A549 (cell line): ENCODE measurements at regions of chr5 and their contacts with region 1.

Region 1: GRCh38 chr5:140502834-140503233 is 44.6 kb upstream of the EIF4EBP3 start:
- DNase-seq: no peak
- ATAC-seq: no peak
- H3K4me3 ChIP-seq: no peak overlapping the region
- H3K27ac ChIP-seq: no peak overlapping the region
- H3K4me1 ChIP-seq: peaks cover 7% of the 10 kb centered on the region; the same call in 2 of the 3 replicates
- CTCF ChIP-seq: no peak
- EP300 ChIP-seq: no peak
- POLR2A ChIP-seq: no peak
- RAD21 ChIP-seq: no peak

Region 2: GRCh38 chr5:140524003-140524402 is 21.2 kb after region 1 on chr5:
- CTCF ChIA-PET with region 1: no interaction called
- POLR2A ChIA-PET with region 1: no interaction called
- DNase-seq: no peak
- ATAC-seq: no peak
- H3K4me3 ChIP-seq: no peak overlapping the region
- H3K27ac ChIP-seq: no peak overlapping the region
- H3K4me1 ChIP-seq: no peaks in the 10 kb centered on the region
- CTCF ChIP-seq: no peak
- EP300 ChIP-seq: no peak
- POLR2A ChIP-seq: no peak
- RAD21 ChIP-seq: no peak

Region 3: DNA sequence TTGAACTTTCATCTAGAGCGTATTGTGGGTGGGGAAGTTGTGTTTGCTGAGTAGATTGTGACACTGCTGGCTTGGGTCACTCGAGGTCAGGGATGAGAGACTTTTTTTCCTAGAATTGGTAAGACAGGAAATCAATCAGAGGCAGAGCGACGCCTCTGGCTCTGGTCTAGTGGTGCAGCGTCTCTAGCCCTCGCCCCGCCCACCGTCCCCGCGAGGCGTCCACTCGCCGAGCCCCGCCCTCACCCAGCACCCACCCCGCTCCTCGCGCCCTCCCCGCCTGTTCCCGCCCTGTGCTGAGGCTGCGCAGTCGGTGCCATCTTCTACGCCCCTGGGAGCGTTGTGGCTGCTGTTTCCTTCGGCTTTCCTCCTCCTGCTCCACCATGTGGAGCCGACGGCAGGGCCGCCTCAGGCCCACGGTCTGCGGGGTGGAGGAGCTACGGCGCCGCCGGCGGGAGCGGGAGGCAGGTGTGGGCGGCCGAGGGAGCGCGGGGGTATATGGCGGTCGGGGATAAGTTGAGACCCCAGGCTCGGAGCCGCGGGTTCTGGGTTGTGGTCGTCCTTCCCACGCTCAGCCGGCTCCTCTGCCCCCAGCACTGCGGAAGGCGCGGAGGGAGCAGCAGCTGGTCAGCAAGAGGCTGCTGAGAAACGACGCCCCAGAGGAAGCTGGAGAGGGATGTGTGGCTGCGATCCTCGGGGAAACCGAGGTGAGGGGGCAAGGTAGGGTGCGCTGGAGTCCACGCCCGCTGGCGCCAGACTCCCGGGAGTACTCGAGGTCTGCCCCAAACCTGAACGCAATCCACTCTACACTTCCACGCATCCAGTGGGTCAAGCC is 136.5 kb after region 1 on chr5 and contains the start of gene TMCO6:
- CTCF ChIA-PET with region 1: no interaction called
- POLR2A ChIA-PET with region 1: interaction called, 10 read pairs
- DNase-seq: peak; percentile 96
- ATAC-seq: peak; percentile 91 to 96
- H3K4me3 ChIP-seq: peak within 1 kb of the TSS; percentile 68
- H3K27ac ChIP-seq: peak within 1 kb of the TSS; percentile 91 to 94
- H3K4me1 ChIP-seq: peaks cover 21% of the 10 kb centered on the region
- CTCF ChIP-seq: peak; percentile 59
- EP300 ChIP-seq: no peak
- POLR2A ChIP-seq: peak; percentile 94
- RAD21 ChIP-seq: peak; percentile 44 to 69
- polyA plus RNA-seq, gene TMCO6: 11.8 and 14.6 TPM in 2 replicates